A549 (cell line): ENCODE measurements at regions of chr19 and their contacts with region 1.

Region 1: GRCh38 chr19:38183251-38183897 is 40.6 kb downstream of the DPF1 start:
- DNase-seq: no peak
- ATAC-seq: peak; percentile 54 to 69; a peak in 5 of 6 replicates
- H3K4me3 ChIP-seq: no peak overlapping the region
- H3K27ac ChIP-seq: no peak overlapping the region
- H3K4me1 ChIP-seq: no peaks in the 10 kb centered on the region
- CTCF ChIP-seq: no peak
- EP300 ChIP-seq: no peak
- POLR2A ChIP-seq: no peak
- RAD21 ChIP-seq: no peak

Region 2: GRCh38 chr19:38095411-38096308 is 87.7 kb before region 1 on chr19:
- CTCF ChIA-PET with region 1: no interaction called
- POLR2A ChIA-PET with region 1: no interaction called
- DNase-seq: peak; percentile 86 to 87
- ATAC-seq: peak; percentile 87 to 89
- H3K4me3 ChIP-seq: no peak overlapping the region
- H3K27ac ChIP-seq: peak overlapping the region in 1 of 2 experiments; percentile 35; a peak in 1 of 6 replicates
- H3K4me1 ChIP-seq: no peaks in the 10 kb centered on the region
- CTCF ChIP-seq: peak; percentile 97
- EP300 ChIP-seq: no peak
- POLR2A ChIP-seq: peak; percentile 8; the same call in 1 of the 2 replicates
- RAD21 ChIP-seq: peak; percentile 82 to 83

Region 3: GRCh38 chr19:38199340-38199739 is 16.0 kb after region 1 on chr19:
- CTCF ChIA-PET with region 1: interaction called, 11 read pairs
- POLR2A ChIA-PET with region 1: interaction called, 6 read pairs
- DNase-seq: no peak
- ATAC-seq: no peak
- H3K4me3 ChIP-seq: no peak overlapping the region
- H3K27ac ChIP-seq: no peak overlapping the region
- H3K4me1 ChIP-seq: peaks cover 18% of the 10 kb centered on the region
- CTCF ChIP-seq: no peak
- EP300 ChIP-seq: no peak
- POLR2A ChIP-seq: no peak
- RAD21 ChIP-seq: no peak